PC-3 (cell line): ENCODE measurements at regions of chr21 and their contacts with region 1.

Region 1: DNA sequence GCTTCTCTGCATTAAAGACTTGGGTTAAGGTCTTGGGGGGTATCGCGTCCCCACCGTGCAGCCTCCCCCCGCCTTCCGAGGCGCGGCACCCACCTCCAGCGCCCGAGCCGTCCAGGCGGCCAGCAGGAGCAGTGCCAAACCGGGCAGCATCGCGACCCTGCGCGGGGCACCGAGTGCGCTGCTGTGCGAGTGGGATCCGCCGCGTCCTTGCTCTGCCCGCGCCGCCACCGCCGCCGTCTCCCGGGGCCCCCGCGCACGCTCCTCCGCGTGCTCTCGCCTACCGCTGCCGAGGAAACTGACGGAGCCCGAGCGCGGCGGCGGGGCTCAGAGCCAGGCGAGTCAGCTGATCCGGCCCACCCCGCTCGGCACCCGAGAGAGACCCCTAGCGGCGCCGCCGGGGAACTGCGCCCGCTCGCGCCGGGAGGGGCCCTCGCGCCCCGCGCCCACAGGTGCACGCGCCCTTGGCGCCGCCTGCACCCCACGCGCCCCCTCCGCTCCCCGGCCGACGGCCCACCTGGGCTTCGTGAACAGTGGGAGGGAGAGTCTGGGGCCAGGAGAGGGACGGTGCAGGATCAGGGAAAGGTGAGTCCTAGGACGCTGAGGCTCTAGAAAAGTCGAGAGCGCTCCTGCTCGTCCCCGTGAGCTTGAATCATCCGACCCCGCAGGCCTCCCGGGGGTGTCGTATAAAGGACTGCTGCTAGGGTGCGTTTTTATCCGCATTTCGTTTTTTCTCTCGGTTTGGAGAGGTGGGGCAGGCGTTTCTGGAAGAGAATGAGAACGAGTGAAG is at the start of gene APP:
- DNase-seq: peak; percentile 83
- ATAC-seq: peak; percentile 41
- H3K4me3 ChIP-seq: peak within 1 kb of the TSS; percentile 82
- H3K27ac ChIP-seq: peak within 1 kb of the TSS; percentile 59
- H3K4me1 ChIP-seq: peaks cover 36% of the 10 kb centered on the region
- H3K27me3 ChIP-seq: no peaks in the 10 kb centered on the region
- CTCF ChIP-seq: peak; percentile 86
- total RNA-seq, gene APP: 266 and 329 TPM in 2 replicates

Region 2: GRCh38 chr21:25895565-25896205 is 275.0 kb before region 1 on chr21:
- CTCF ChIA-PET with region 1: no interaction called
- POLR2A ChIA-PET with region 1: no interaction called
- intact Hi-C with region 1: loop called (anchors 5 kb)
- DNase-seq: peak; percentile 53
- ATAC-seq: peak; percentile 57; the same call in 1 of the 2 replicates
- H3K4me3 ChIP-seq: no peak overlapping the region
- H3K27ac ChIP-seq: no peak overlapping the region
- H3K4me1 ChIP-seq: no peaks in the 10 kb centered on the region
- H3K27me3 ChIP-seq: no peaks in the 10 kb centered on the region
- CTCF ChIP-seq: peak; percentile 80

Region 3: GRCh38 chr21:26127918-26128317 is 42.7 kb before region 1 on chr21:
- CTCF ChIA-PET with region 1: no interaction called
- POLR2A ChIA-PET with region 1: no interaction called
- intact Hi-C with region 1: loop called (anchors 5 kb)
- DNase-seq: peak; percentile 46
- ATAC-seq: peak; percentile 50
- H3K4me3 ChIP-seq: no peak overlapping the region
- H3K27ac ChIP-seq: no peak overlapping the region
- H3K4me1 ChIP-seq: peaks cover 4% of the 10 kb centered on the region; the same call in 1 of the 2 replicates
- H3K27me3 ChIP-seq: no peaks in the 10 kb centered on the region
- CTCF ChIP-seq: no peak

Region 4: GRCh38 chr21:26280775-26281174 is 110.1 kb after region 1 on chr21:
- CTCF ChIA-PET with region 1: no interaction called
- POLR2A ChIA-PET with region 1: no interaction called
- intact Hi-C with region 1: no loop called
- DNase-seq: peak; percentile 19
- ATAC-seq: peak; percentile 42
- H3K4me3 ChIP-seq: no peak overlapping the region
- H3K27ac ChIP-seq: no peak overlapping the region
- H3K4me1 ChIP-seq: no peaks in the 10 kb centered on the region
- H3K27me3 ChIP-seq: no peaks in the 10 kb centered on the region
- CTCF ChIP-seq: no peak

Region 5: GRCh38 chr21:26469789-26470188 is 299.1 kb after region 1 on chr21:
- CTCF ChIA-PET with region 1: no interaction called
- POLR2A ChIA-PET with region 1: no interaction called
- intact Hi-C with region 1: loop called (anchors 5 kb)
- DNase-seq: peak; percentile 71
- ATAC-seq: peak; percentile 98
- H3K4me3 ChIP-seq: no peak overlapping the region
- H3K27ac ChIP-seq: no peak overlapping the region
- H3K4me1 ChIP-seq: no peaks in the 10 kb centered on the region; the same call in 1 of the 2 replicates
- H3K27me3 ChIP-seq: no peaks in the 10 kb centered on the region
- CTCF ChIP-seq: no peak